PC-9 (cell line): ENCODE measurements at regions of chr4 and their contacts with region 1.

Region 1: GRCh38 chr4:3880615-3881120 is 114.5 kb downstream of the ADRA2C start:
- DNase-seq: peak in 1 of 2 experiments; percentile 73
- H3K4me3 ChIP-seq: no peak overlapping the region
- H3K27ac ChIP-seq: no peak overlapping the region
- H3K4me1 ChIP-seq: no peaks in the 10 kb centered on the region
- H3K27me3 ChIP-seq: peaks cover 43% of the 10 kb centered on the region
- CTCF ChIP-seq: peak; percentile 79

Region 2: GRCh38 chr4:3436798-3437581 is 443.7 kb before region 1 on chr4:
- CTCF ChIA-PET with region 1: no interaction called
- POLR2A ChIA-PET with region 1: no interaction called
- intact Hi-C with region 1: no loop called
- DNase-seq: peak; percentile 61 to 90
- H3K4me3 ChIP-seq: no peak overlapping the region
- H3K27ac ChIP-seq: no peak overlapping the region
- H3K4me1 ChIP-seq: peaks cover 10% of the 10 kb centered on the region; the same call in 1 of the 2 replicates
- H3K27me3 ChIP-seq: no peaks in the 10 kb centered on the region
- CTCF ChIP-seq: no peak

Region 3: GRCh38 chr4:3531879-3532713 is 348.6 kb before region 1 on chr4 and contains the start of gene LRPAP1:
- CTCF ChIA-PET with region 1: no interaction called
- POLR2A ChIA-PET with region 1: no interaction called
- intact Hi-C with region 1: loop called (anchors 5 kb)
- DNase-seq: peak; percentile 58 to 86
- H3K4me3 ChIP-seq: peak within 1 kb of the TSS; percentile 81
- H3K27ac ChIP-seq: no peak within 1 kb of the TSS
- H3K4me1 ChIP-seq: peaks cover 8% of the 10 kb centered on the region; the same call in 1 of the 2 replicates
- H3K27me3 ChIP-seq: 0 out of 2 replicates have a peak, but pooled peaks cover 6% of the 10 kb centered on the region
- CTCF ChIP-seq: no peak
- total RNA-seq, gene LRPAP1: 126 and 149 TPM in 2 replicates

Region 4: DNA sequence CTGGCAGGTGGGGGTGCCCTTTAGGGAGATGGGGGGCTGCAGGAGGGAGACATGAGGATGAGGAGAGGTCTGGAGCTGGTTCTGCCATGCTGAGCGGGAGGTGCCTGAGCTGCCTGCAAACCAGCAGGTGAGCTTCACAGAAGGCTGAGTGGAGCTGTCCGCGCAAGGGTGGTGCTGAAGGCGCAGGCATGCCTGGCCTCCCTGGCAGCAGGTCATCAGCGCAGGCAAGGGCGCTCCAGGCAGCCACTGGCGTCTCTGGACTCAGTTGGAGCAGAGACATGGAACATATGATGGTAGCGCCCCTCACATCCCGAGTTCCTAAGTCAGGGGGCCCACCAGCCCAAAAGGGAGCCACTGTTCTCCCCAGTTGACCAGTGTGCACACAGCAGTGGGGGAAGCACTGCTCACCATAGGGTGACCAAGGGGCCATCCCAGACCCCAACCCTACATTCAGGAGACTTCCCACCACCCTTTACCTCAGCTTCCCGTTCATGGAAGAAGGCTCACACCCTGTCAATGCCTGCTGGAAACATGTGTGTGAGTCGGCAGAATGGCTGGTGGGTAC is 88.6 kb before region 1 on chr4:
- CTCF ChIA-PET with region 1: interaction called, 12 read pairs
- POLR2A ChIA-PET with region 1: no interaction called
- intact Hi-C with region 1: no loop called
- DNase-seq: peak in 1 of 2 experiments; percentile 49
- H3K4me3 ChIP-seq: no peak overlapping the region
- H3K27ac ChIP-seq: no peak overlapping the region
- H3K4me1 ChIP-seq: no peaks in the 10 kb centered on the region
- H3K27me3 ChIP-seq: peaks cover 23% of the 10 kb centered on the region
- CTCF ChIP-seq: no peak

Region 5: GRCh38 chr4:3868211-3869173 is 12.2 kb before region 1 on chr4:
- CTCF ChIA-PET with region 1: no interaction called
- POLR2A ChIA-PET with region 1: no interaction called
- intact Hi-C with region 1: no loop called
- DNase-seq: no peak
- H3K4me3 ChIP-seq: no peak overlapping the region
- H3K27ac ChIP-seq: no peak overlapping the region
- H3K4me1 ChIP-seq: no peaks in the 10 kb centered on the region
- H3K27me3 ChIP-seq: peaks cover 63% of the 10 kb centered on the region
- CTCF ChIP-seq: no peak

Region 6: DNA sequence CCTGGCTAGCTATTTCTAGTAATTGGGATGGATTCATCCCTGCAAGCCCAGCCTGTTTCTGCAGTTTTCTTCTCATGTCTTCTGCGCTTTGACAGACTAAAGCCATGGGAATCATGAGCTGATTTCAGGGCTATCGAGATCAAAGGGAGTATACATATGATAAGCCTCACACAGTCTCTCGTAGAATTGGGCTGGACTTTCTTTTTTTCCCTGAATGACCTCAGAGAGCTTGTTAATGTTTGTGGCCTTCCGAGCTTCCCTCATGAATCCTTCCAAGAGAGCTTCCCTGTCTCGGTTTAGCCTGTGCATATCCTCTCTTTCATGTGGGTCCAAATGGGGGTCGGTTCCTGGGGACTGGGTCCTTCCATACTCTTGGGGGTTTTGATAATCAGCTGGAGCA is 15.8 kb after region 1 on chr4:
- CTCF ChIA-PET with region 1: no interaction called
- POLR2A ChIA-PET with region 1: no interaction called
- intact Hi-C with region 1: no loop called
- DNase-seq: no peak
- H3K4me3 ChIP-seq: no peak overlapping the region
- H3K27ac ChIP-seq: no peak overlapping the region
- H3K4me1 ChIP-seq: no peaks in the 10 kb centered on the region
- H3K27me3 ChIP-seq: peaks cover 20% of the 10 kb centered on the region
- CTCF ChIP-seq: no peak